Activated CD4-positive, alpha-beta memory T cell treated with anti-CD3 and anti-CD28 coated beads, Interleukin-2, amount 10 ng/mL, durations not matched to agents 7 days and 5 days (primary cell): ENCODE measurements at regions of chr4 and their contacts with region 1.

Region 1: GRCh38 chr4:122577808-122578781 is 42.8 kb downstream of the IL21 start:
- DNase-seq: peak; percentile 68
- H3K4me3 Mint-ChIP-seq: peak overlapping the region; percentile 48
- H3K27ac Mint-ChIP-seq: peak overlapping the region; percentile 80
- H3K4me1 Mint-ChIP-seq: peaks cover 36% of the 10 kb centered on the region
- H3K27me3 Mint-ChIP-seq: no peaks in the 10 kb centered on the region

Region 2: DNA sequence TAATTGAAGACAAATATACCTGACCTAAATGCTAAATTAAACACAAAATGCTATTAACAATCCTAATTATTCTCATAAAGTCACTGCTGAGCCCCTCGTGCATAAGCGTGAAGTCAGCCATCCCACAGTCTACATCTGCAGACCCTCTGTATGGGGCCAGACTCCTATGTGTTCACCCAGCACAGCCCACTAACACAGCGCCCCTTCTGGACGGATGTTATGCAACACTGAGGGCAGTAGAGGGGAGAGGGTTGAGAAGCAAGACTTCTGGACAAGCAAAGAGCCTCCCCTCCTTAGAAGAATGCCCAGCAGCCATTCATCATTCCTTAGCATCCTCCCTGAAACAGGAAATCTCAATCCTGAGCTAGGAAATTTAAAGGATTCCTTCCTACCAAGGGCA is 634.2 kb before region 1 on chr4:
- CTCF ChIA-PET with region 1: interaction called, 33 read pairs
- POLR2A ChIA-PET with region 1: interaction called, 4 read pairs
- DNase-seq: no peak
- H3K4me3 Mint-ChIP-seq: no peak overlapping the region
- H3K27ac Mint-ChIP-seq: no peak overlapping the region
- H3K4me1 Mint-ChIP-seq: peaks cover 2% of the 10 kb centered on the region
- H3K27me3 Mint-ChIP-seq: peaks cover 52% of the 10 kb centered on the region

Region 3: GRCh38 chr4:122313001-122313400 is 265.1 kb before region 1 on chr4:
- CTCF ChIA-PET with region 1: interaction called, 27 read pairs
- POLR2A ChIA-PET with region 1: no interaction called
- DNase-seq: no peak
- H3K4me3 Mint-ChIP-seq: no peak overlapping the region
- H3K27ac Mint-ChIP-seq: no peak overlapping the region
- H3K4me1 Mint-ChIP-seq: no peaks in the 10 kb centered on the region
- H3K27me3 Mint-ChIP-seq: no peaks in the 10 kb centered on the region

Region 4: DNA sequence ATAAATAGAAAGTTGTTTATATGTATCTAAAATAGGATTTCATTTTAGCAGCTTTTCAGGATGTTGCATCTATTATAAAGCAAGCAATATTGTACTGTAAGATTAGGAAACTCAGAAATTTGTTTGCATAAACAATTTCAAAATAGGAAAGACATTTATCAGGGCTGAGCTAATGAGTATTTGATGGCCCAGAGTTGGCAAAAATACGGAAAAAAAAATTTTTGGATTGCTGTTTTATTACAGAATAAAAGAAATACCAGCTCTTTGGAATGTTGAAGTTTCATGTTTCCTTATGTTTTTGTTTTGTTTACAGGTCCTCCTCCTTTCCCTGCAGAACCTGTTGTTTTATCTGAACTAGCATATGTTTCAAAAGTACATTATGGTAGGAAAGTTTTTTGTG is 184.8 kb before region 1 on chr4:
- CTCF ChIA-PET with region 1: no interaction called
- POLR2A ChIA-PET with region 1: no interaction called
- DNase-seq: no peak
- H3K4me3 Mint-ChIP-seq: no peak overlapping the region
- H3K27ac Mint-ChIP-seq: no peak overlapping the region
- H3K4me1 Mint-ChIP-seq: no peaks in the 10 kb centered on the region
- H3K27me3 Mint-ChIP-seq: no peaks in the 10 kb centered on the region

Region 5: DNA sequence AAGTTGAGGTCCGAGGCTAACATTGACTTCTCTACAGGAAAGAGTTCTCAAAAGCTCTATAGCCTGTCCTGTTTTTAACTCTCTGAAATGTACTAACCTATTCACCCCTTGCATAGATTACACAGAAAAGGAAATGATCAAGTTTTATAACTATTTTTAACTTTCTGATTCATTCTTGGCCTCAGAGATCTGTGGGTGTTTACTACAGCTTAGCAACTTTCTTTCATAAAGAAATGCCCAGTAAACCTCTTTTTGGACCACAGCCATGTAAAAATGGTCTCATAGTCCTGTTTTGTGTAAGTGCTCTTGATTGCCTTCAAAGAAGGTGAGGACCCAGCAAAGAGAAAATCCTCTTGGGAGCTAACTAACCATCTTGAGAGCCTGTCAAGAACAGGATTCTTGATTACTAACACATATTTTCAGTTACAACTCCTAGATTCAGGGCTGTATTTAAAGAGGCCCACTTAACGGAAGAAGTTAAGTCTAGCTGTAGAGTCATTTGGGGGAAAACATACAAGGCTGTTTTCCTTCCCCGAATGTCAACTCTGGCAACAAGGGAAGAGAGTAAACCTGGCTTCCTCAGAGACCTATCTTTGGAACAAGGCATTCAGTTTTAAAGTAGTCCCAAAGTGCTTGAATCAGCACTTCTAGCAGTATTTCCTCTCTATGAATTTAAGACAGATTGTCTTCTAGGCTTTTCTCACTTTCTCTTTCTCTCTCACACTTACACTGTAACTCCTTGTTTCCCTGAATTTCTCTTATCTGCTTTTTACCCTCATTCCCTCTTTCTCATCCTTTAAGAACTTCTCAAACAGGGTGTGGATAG is 35.5 kb before region 1 on chr4:
- CTCF ChIA-PET with region 1: interaction called, 11 read pairs
- POLR2A ChIA-PET with region 1: interaction called, 3 read pairs
- DNase-seq: no peak
- H3K4me3 Mint-ChIP-seq: no peak overlapping the region
- H3K27ac Mint-ChIP-seq: peak overlapping the region; percentile 72
- H3K4me1 Mint-ChIP-seq: peaks cover 46% of the 10 kb centered on the region
- H3K27me3 Mint-ChIP-seq: no peaks in the 10 kb centered on the region

Region 6: GRCh38 chr4:122602277-122603142 is 24.4 kb after region 1 on chr4:
- CTCF ChIA-PET with region 1: interaction called, 13 read pairs
- POLR2A ChIA-PET with region 1: no interaction called
- DNase-seq: no peak
- H3K4me3 Mint-ChIP-seq: no peak overlapping the region
- H3K27ac Mint-ChIP-seq: no peak overlapping the region
- H3K4me1 Mint-ChIP-seq: peaks cover 13% of the 10 kb centered on the region
- H3K27me3 Mint-ChIP-seq: peaks cover 7% of the 10 kb centered on the region

Region 7: GRCh38 chr4:122732329-122733026 is 154.4 kb after region 1 on chr4 and contains the start of gene BBS12:
- CTCF ChIA-PET with region 1: interaction called, 18 read pairs
- POLR2A ChIA-PET with region 1: no interaction called
- DNase-seq: peak; percentile 99
- H3K4me3 Mint-ChIP-seq: peak within 1 kb of the TSS; percentile 83
- H3K27ac Mint-ChIP-seq: peak within 1 kb of the TSS; percentile 91
- H3K4me1 Mint-ChIP-seq: peaks cover 23% of the 10 kb centered on the region
- H3K27me3 Mint-ChIP-seq: no peaks in the 10 kb centered on the region
- total RNA-seq, gene BBS12: 3.7 to 5.0 TPM